ENCODE measurements at regions of chr14 and their contacts with region 1.

Region 1: GRCh38 chr14:94505641-94506040 is 3.6 kb downstream of the SERPINA12 start:
- DNase-seq: no peak
- H3K27ac ChIP-seq: no peak overlapping the region
- CTCF ChIP-seq: no peak

Region 2: GRCh38 chr14:94485944-94486841 is 19.4 kb before region 1 on chr14:
- CTCF ChIA-PET with region 1: interaction called, 14 read pairs
- POLR2A ChIA-PET with region 1: no interaction called
- DNase-seq: peak; percentile 72
- H3K27ac ChIP-seq: no peak overlapping the region
- CTCF ChIP-seq: peak; percentile 98

Region 3: GRCh38 chr14:94536823-94537222 is 31.2 kb after region 1 on chr14:
- CTCF ChIA-PET with region 1: no interaction called
- POLR2A ChIA-PET with region 1: no interaction called
- DNase-seq: no peak
- H3K27ac ChIP-seq: no peak overlapping the region
- CTCF ChIP-seq: no peak

Measured in RWPE1 (cell line).